Endothelial cell of umbilical vein (primary cell): ENCODE measurements at regions of chr7 and their contacts with region 1.

Region 1: DNA sequence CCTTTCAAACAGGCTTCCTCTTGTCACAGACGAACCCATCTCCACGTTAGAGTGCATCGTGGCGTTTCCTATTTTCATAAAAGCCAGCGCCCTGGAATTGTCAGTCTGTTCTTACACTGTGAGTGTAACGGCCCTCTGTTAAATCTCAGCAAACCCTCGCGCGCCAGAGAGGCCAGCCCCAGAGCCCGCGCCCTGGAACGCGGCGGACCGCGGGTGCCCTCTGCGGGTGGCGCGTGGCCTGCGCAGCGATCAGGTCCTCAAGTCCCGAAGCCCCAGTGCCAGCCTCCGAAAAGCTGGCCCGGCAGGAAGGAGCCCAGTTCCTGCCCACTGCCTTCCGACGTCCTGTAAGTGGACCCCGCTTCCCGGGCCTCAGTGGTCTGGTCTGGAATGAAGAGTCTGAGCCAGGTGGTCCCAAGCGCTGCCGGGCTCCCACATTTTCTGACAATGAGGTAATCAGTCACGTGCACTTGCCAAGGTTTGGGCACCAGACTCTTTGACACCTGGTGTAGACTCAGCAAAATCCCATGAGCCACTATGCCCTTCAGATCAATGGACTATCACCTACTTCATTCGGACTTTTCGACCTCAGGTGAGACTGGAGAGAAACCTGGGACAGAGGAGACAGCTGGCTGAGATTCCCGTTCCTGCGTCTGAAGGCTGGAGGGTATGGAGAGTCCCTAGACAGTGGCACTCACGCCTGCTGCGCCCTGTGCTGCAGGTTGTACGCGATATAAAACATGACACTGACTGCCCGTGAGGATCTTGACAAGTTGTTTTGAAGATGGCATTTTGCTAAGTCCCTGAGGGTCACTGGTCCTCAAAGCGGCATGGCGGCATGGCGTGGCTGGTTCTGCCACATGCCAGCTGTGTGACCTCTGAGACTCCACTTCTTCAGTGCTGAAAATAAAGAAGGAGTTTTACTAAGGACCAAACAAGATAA is 109.4 kb upstream of the LANCL2 start:
- DNase-seq: peak; percentile 76
- H3K4me3 ChIP-seq: peak overlapping the region; percentile 23 to 75 (median 39)
- H3K27ac ChIP-seq: no peak overlapping the region
- H3K4me1 ChIP-seq: peaks cover 9% of the 10 kb centered on the region
- H3K27me3 ChIP-seq: peaks cover 44 to 53% of the 10 kb centered on the region in 2 experiments
- CTCF ChIP-seq: peak; percentile 92 to 97
- POLR2A ChIP-seq: no peak

Region 2: DNA sequence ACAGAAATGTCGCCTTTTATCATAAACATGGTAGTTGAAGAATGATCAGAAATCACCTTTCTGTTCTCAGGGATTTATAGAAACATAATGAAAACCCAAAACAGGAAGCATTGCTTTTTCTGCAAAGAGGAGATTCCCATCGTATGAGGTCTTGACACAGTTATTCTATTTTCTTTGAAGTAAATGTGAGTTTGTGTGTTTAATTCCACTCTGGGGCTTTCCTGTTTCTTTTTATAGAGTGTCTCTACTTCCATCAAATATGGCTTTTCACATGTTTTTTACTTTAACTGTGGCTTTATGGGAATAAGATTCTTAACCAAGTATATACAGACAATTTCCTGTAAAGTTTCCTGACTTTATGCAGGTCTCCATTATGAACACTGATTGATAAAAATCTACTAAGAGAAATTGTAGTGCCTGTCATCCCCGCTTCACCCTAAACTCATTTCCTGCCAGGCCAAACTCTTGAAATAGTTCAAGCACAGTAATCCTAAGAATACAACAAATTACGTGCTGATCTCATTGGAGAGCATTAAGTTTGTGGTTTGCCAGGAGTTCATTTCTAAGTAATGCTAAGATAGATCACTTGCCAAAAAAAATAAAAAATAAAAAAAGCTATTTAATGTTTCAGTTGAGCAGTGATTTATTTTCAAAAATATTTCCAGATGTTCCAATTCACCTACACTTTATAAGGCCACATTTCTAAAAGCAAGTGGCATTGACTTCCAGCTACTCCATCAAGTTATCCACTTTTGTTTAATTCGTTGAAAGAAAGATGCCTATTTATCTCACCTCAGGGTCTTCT is 444.5 kb before region 1 on chr7:
- CTCF ChIA-PET with region 1: interaction called, 15 read pairs
- POLR2A ChIA-PET with region 1: no interaction called
- dilution Hi-C with region 1: no loop called
- intact Hi-C with region 1: no loop called
- DNase-seq: peak; percentile 78
- H3K4me3 ChIP-seq: peak overlapping the region in 1 of 3 experiments; percentile 12
- H3K27ac ChIP-seq: no peak overlapping the region
- H3K4me1 ChIP-seq: peaks cover 22% of the 10 kb centered on the region
- H3K27me3 ChIP-seq: peaks cover 12 to 14% of the 10 kb centered on the region in 2 experiments
- CTCF ChIP-seq: no peak
- POLR2A ChIP-seq: no peak

Region 3: DNA sequence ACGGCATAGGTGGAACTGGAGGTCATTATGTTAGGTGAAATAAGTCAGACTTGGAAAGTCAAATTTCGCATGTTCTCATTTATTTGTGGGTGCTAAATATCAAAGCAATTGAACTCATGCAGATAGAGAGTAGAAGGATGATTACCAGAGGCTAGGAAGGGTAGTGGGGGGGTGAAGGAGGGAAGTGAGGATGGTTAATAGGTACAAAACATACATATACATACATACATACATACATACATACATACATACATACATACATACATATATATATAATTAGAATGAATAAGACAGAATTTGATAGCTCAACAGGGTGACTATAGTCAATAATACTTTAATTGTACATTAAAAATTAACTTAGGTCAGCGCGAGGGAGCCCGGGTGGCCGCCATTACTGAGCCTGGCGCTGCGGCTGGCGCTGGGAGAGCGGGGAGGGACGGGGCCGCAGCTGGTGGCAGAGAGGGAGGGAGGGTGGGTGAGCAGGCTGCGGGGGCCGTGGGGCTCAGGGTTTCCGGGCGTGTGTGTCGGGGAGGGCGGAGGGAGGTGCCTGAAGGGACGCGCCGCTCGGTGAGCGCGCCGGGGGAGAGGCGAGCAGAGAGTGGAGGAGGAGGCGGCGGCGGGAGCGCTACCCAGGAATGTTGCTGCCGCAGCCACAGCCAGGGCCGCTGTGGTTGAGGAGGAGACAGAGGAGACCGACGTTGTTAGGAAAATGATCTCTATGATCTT is 322.8 kb before region 1 on chr7:
- CTCF ChIA-PET with region 1: interaction called, 5 read pairs
- POLR2A ChIA-PET with region 1: no interaction called
- dilution Hi-C with region 1: no loop called
- intact Hi-C with region 1: loop called (anchors 2 kb)
- DNase-seq: peak; percentile 28
- H3K4me3 ChIP-seq: peak overlapping the region; percentile 29 to 61 (median 41)
- H3K27ac ChIP-seq: no peak overlapping the region
- H3K4me1 ChIP-seq: peaks cover 5% of the 10 kb centered on the region
- H3K27me3 ChIP-seq: peaks cover 18 to 51% of the 10 kb centered on the region in 2 experiments
- CTCF ChIP-seq: no peak
- POLR2A ChIP-seq: no peak

Region 4: DNA sequence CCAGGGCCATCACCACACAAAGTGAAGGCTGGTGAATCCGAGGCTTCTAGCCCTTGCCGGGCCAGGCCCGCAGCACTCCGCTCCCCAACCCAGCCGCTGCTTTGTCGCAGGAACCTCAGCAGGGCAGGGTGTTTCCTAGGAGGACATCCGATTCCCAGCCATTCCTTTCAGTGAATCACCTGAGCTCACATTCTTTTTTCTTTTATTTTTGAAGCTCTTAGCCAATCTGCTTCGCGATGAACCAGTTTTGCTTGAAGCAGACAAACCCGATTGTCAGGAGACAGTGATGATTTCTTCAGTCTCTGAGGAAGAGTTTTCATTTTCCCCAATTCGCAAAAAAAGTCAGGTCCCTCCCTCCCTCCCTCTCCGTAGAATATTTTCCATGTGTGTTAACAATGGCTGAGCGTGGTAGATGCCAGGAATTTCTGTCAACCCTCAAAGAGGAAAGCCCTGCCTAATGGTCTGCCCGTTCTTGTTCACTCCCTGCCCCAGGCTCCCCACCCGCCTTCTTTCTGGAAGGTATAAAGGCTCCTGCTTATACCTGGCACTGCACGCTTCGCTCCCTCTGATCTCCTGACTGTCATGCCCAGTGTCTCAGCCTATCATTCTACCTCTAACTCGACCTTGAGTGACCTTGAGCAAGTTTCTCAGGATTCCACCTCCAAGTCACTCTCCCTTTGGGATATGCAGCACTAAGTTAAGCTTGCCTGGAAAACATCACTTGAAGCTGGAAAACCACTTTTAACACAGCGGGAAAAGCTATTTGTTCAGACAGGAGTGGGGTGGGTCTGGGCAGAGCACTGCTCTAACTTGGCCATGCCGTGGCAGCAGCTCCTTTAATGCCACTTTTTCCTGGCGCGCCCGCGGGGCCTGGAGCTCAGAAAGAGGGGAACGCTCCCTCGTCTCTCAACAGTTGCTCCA is 201.9 kb before region 1 on chr7:
- CTCF ChIA-PET with region 1: interaction called, 11 read pairs
- POLR2A ChIA-PET with region 1: no interaction called
- dilution Hi-C with region 1: no loop called
- intact Hi-C with region 1: no loop called
- DNase-seq: no peak
- H3K4me3 ChIP-seq: no peak overlapping the region
- H3K27ac ChIP-seq: no peak overlapping the region
- H3K4me1 ChIP-seq: peaks cover 9% of the 10 kb centered on the region
- H3K27me3 ChIP-seq: no peaks in the 10 kb centered on the region
- CTCF ChIP-seq: no peak
- POLR2A ChIP-seq: no peak

Region 5: GRCh38 chr7:55144333-55145317 is 111.1 kb before region 1 on chr7:
- CTCF ChIA-PET with region 1: interaction called, 17 read pairs
- POLR2A ChIA-PET with region 1: no interaction called
- dilution Hi-C with region 1: no loop called
- intact Hi-C with region 1: no loop called
- DNase-seq: no peak
- H3K4me3 ChIP-seq: no peak overlapping the region
- H3K27ac ChIP-seq: no peak overlapping the region
- H3K4me1 ChIP-seq: peaks cover 9% of the 10 kb centered on the region
- H3K27me3 ChIP-seq: no peaks in the 10 kb centered on the region
- CTCF ChIP-seq: peak in 1 of 2 donors; percentile 31
- POLR2A ChIP-seq: no peak

Region 6: DNA sequence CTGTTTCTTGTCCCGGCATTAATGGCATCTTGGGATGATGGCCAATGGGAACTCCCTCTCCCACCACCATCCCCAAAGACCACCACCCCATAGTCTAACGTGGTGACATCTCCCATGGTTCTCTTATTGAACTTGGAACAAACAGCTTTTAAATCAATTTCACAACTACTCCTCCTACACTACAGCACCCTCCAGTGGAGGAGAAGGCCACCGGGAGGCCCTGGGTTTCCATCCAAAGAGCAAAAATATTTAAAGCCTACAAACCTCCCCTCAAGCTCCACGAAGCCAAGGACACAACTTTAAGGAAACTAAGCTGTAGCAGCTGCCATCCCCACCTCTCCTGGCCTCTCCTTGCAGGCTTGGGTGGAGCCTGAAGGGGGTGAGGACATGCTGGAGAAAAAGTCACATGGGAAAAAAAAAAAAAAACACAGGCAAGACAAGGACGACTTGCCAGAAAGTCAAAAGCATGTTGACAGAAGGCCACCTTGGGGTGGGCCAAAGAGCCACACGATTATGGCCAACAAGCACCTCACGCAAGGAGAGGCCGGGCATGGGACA is 15.4 kb after region 1 on chr7:
- CTCF ChIA-PET with region 1: interaction called, 32 read pairs
- POLR2A ChIA-PET with region 1: no interaction called
- dilution Hi-C with region 1: no loop called
- intact Hi-C with region 1: no loop called
- DNase-seq: no peak
- H3K4me3 ChIP-seq: no peak overlapping the region
- H3K27ac ChIP-seq: no peak overlapping the region
- H3K4me1 ChIP-seq: no peaks in the 10 kb centered on the region
- H3K27me3 ChIP-seq: peaks cover 4 to 5% of the 10 kb centered on the region in 2 experiments
- CTCF ChIP-seq: peak; percentile 16 to 22
- POLR2A ChIP-seq: no peak